Caco-2 (cell line): ENCODE measurements at regions of chr2 and their contacts with region 1.

Region 1: GRCh38 chr2:73163483-73164367 is 38.6 kb upstream of the NOTO start:
- DNase-seq: peak; percentile 80 to 86
- H3K4me3 ChIP-seq: no peak overlapping the region
- H3K4me3 Mint-ChIP-seq: no peak overlapping the region
- H3K27ac Mint-ChIP-seq: no peak overlapping the region
- H3K4me1 ChIP-seq: no peaks in the 10 kb centered on the region
- H3K4me1 Mint-ChIP-seq: no peaks in the 10 kb centered on the region
- H3K27me3 ChIP-seq: no peaks in the 10 kb centered on the region
- H3K27me3 Mint-ChIP-seq: peaks cover 8% of the 10 kb centered on the region
- CTCF ChIP-seq: peak; percentile 86 to 92

Region 2: GRCh38 chr2:72993147-72993932 is 170.4 kb before region 1 on chr2:
- CTCF ChIA-PET with region 1: interaction called, 6 read pairs
- POLR2A ChIA-PET with region 1: no interaction called
- intact Hi-C with region 1: loop called (anchors 1 kb)
- DNase-seq: peak in 1 of 2 experiments; percentile 70
- H3K4me3 ChIP-seq: no peak overlapping the region
- H3K4me3 Mint-ChIP-seq: no peak overlapping the region
- H3K27ac Mint-ChIP-seq: no peak overlapping the region
- H3K4me1 ChIP-seq: no peaks in the 10 kb centered on the region
- H3K4me1 Mint-ChIP-seq: no peaks in the 10 kb centered on the region
- H3K27me3 ChIP-seq: no peaks in the 10 kb centered on the region
- H3K27me3 Mint-ChIP-seq: no peaks in the 10 kb centered on the region
- CTCF ChIP-seq: peak; percentile 78 to 98

Region 3: GRCh38 chr2:73071360-73072133 is 92.2 kb before region 1 on chr2 and contains the start of gene SFXN5:
- CTCF ChIA-PET with region 1: no interaction called
- POLR2A ChIA-PET with region 1: no interaction called
- intact Hi-C with region 1: loop called (anchors 5 kb)
- DNase-seq: peak; percentile 97 to 99
- H3K4me3 ChIP-seq: peak within 1 kb of the TSS; percentile 94
- H3K4me3 Mint-ChIP-seq: peak within 1 kb of the TSS; percentile 78
- H3K27ac Mint-ChIP-seq: peak within 1 kb of the TSS; percentile 91
- H3K4me1 ChIP-seq: 0 out of 2 replicates have a peak, but pooled peaks cover 6% of the 10 kb centered on the region
- H3K4me1 Mint-ChIP-seq: peaks cover 18% of the 10 kb centered on the region
- H3K27me3 ChIP-seq: no peaks in the 10 kb centered on the region
- H3K27me3 Mint-ChIP-seq: no peaks in the 10 kb centered on the region
- CTCF ChIP-seq: peak in 1 of 2 experiments; percentile 38
- total RNA-seq, gene SFXN5: 26.8 and 31.3 TPM in 2 replicates

Region 4: GRCh38 chr2:73085691-73086360 is 77.9 kb before region 1 on chr2:
- CTCF ChIA-PET with region 1: interaction called, 5 read pairs
- POLR2A ChIA-PET with region 1: no interaction called
- intact Hi-C with region 1: loop called (anchors 1 kb)
- DNase-seq: peak; percentile 87 to 89
- H3K4me3 ChIP-seq: no peak overlapping the region
- H3K4me3 Mint-ChIP-seq: no peak overlapping the region
- H3K27ac Mint-ChIP-seq: no peak overlapping the region
- H3K4me1 ChIP-seq: peaks cover 27% of the 10 kb centered on the region
- H3K4me1 Mint-ChIP-seq: peaks cover 24% of the 10 kb centered on the region
- H3K27me3 ChIP-seq: no peaks in the 10 kb centered on the region
- H3K27me3 Mint-ChIP-seq: no peaks in the 10 kb centered on the region
- CTCF ChIP-seq: peak; percentile 93 to 95

Region 5: GRCh38 chr2:73260034-73260984 is 96.6 kb after region 1 on chr2:
- CTCF ChIA-PET with region 1: interaction called, 10 read pairs
- POLR2A ChIA-PET with region 1: no interaction called
- intact Hi-C with region 1: no loop called
- DNase-seq: peak; percentile 71 to 79
- H3K4me3 ChIP-seq: no peak overlapping the region
- H3K4me3 Mint-ChIP-seq: no peak overlapping the region
- H3K27ac Mint-ChIP-seq: no peak overlapping the region
- H3K4me1 ChIP-seq: no peaks in the 10 kb centered on the region
- H3K4me1 Mint-ChIP-seq: no peaks in the 10 kb centered on the region
- H3K27me3 ChIP-seq: no peaks in the 10 kb centered on the region
- H3K27me3 Mint-ChIP-seq: no peaks in the 10 kb centered on the region
- CTCF ChIP-seq: peak; percentile 55 to 80